Aorta (tissue), 5 donors: ENCODE measurements at regions of chr2 and their contacts with region 1.

Region 1: DNA sequence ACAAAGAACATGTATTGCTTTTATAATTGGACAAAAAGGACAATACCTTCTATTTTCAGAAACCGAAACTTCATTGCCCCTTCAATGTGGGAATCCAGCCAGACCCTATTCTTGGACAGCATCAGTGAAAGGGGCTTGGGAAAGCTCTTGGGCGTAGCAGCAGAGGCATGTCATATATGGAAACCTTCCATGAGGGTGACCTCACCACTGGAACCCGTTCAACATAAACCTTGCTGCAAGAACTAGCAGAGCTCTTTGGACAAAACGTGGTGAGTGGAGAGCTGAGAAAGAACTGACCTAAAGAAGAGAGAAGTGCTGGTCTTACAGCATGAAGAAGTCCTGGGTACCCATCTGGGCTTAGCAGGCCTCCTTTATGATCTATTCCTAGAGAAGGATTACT is 22.7 kb upstream of the ACTG2 start:
- DNase-seq: peak; percentile 75 to 81
- ATAC-seq: peak; percentile 91
- H3K4me3 ChIP-seq: no peak overlapping the region
- H3K27ac ChIP-seq: peak overlapping the region; percentile 58 to 74
- H3K4me1 ChIP-seq: no peaks in the 10 kb centered on the region
- H3K27me3 ChIP-seq: no peaks in the 10 kb centered on the region

Region 2: GRCh38 chr2:73892631-73893329 is 22.7 kb after region 1 on chr2 and contains the start of gene ACTG2:
- intact Hi-C with region 1: loop called in 1 of 2 experiments (anchors 2 kb)
- DNase-seq: peak; percentile 74 to 88
- ATAC-seq: peak; percentile 78
- H3K4me3 ChIP-seq: peak within 1 kb of the TSS; percentile 55 to 65
- H3K27ac ChIP-seq: peak within 1 kb of the TSS; percentile 96 to 100
- H3K4me1 ChIP-seq: no peaks in the 10 kb centered on the region
- H3K27me3 ChIP-seq: no peaks in the 10 kb centered on the region
- total RNA-seq, gene ACTG2: 416 to 1,843 TPM

Region 3: GRCh38 chr2:73926493-73927338 is 56.6 kb after region 1 on chr2 and contains the start of gene DGUOK:
- intact Hi-C with region 1: no loop called
- DNase-seq: peak; percentile 98 to 99
- ATAC-seq: peak; percentile 100
- H3K4me3 ChIP-seq: peak within 1 kb of the TSS; percentile 32 to 79
- H3K27ac ChIP-seq: peak within 1 kb of the TSS; percentile 88 to 90
- H3K4me1 ChIP-seq: peaks cover 3 to 5% of the 10 kb centered on the region in 2 donors
- H3K27me3 ChIP-seq: no peaks in the 10 kb centered on the region
- total RNA-seq, gene DGUOK: 47.5 to 49.8 TPM